Endothelial cell of umbilical vein (primary cell): ENCODE measurements at regions of chr17 and their contacts with region 1.

Region 1: GRCh38 chr17:8409966-8410864 is 12.6 kb upstream of the RNF222 start:
- DNase-seq: peak; percentile 84
- H3K4me3 ChIP-seq: no peak overlapping the region
- H3K27ac ChIP-seq: no peak overlapping the region
- H3K4me1 ChIP-seq: no peaks in the 10 kb centered on the region
- H3K27me3 ChIP-seq: peaks cover 4 to 9% of the 10 kb centered on the region in 2 experiments
- CTCF ChIP-seq: peak; percentile 81 to 86
- POLR2A ChIP-seq: no peak

Region 2: DNA sequence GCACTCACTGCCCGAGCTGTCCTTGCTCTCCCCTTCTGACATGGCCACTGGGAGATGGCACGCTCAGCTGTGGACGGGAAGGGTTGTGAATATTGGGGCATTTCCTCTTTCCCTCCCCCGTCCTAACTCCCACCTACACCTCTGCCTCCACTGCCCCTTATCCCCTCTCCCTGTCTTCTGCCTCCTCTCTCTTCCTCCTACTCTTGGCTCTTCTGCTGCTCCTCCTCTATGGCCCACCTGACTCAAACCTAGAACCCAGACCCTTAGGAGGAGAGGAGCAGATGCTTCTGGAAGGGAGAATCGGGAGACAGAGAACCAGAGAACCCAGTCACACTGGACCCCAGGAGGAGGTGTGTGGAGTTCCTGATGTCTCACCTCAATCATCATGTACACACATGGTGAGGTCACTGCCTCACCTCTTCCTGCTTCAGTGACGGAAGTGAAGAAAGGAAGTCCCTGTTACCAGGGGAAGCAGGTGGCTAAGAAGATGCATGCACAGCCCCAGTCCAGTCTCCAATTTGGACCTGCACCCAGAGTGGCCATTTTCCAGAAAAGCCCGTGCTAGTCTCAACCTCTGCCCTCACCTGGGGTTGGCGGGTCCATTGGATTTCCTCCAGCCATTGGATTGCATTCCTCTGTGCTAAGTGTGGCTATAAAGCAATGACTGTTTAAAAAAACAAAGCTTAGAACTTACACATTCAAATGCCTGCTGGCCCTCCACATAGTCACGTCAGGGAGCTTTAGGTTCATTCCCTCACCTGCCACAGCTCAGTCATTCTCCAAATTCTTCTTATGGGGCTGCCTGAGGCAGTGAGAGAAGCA is 16.6 kb before region 1 on chr17:
- CTCF ChIA-PET with region 1: interaction called, 10 read pairs
- POLR2A ChIA-PET with region 1: no interaction called
- dilution Hi-C with region 1: no loop called
- intact Hi-C with region 1: no loop called
- DNase-seq: no peak
- H3K4me3 ChIP-seq: no peak overlapping the region
- H3K27ac ChIP-seq: no peak overlapping the region
- H3K4me1 ChIP-seq: peaks cover 4% of the 10 kb centered on the region
- H3K27me3 ChIP-seq: peaks cover 13 to 18% of the 10 kb centered on the region in 2 experiments
- CTCF ChIP-seq: no peak
- POLR2A ChIP-seq: no peak

Region 3: DNA sequence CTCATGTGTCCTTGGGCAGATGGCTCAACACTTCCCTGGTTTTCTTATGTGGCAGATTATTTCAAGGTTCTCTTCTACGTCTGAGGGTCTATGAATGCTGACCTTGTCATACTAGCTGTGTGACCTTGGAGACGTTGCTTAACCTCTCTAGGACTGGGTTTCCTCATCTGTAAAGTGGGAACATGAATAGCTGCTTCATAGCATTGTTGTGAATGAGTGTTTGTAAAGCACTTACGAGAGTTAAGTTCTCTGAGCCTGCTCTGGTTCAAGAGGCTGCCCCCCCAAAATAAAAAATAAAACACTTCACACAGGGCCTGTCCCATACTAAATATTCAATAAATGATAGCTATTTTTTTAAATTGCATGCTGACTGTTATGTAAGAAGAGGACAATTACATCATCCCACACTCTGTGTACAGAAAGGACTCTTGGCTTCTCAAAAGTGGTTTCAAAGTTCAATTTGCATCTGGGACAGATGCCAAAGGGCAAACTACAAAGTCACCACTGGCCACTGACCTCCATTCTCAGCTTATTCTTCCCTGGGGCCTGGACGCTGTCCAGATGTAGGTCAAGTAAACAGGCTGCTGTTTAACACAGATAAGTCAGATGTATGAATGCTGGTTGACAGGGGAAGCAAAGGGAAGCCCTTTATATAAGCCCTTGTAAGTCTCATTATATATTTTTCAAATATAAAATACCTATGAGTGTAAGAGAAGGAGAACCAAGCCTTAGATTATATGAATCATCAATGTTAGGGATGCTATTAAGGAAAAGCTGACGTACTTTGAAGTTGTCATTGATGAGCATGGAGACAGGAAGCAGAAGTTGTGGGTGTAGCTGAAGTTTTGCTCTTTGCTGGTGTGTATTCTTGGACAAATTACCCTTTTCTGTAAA is 10.1 kb after region 1 on chr17:
- CTCF ChIA-PET with region 1: interaction called, 29 read pairs
- POLR2A ChIA-PET with region 1: no interaction called
- dilution Hi-C with region 1: no loop called
- intact Hi-C with region 1: no loop called
- DNase-seq: peak; percentile 98
- H3K4me3 ChIP-seq: no peak overlapping the region
- H3K27ac ChIP-seq: no peak overlapping the region
- H3K4me1 ChIP-seq: peaks cover 12% of the 10 kb centered on the region
- H3K27me3 ChIP-seq: peaks cover 2 to 6% of the 10 kb centered on the region in 2 experiments
- CTCF ChIP-seq: no peak
- POLR2A ChIP-seq: peak; percentile 55

Region 4: DNA sequence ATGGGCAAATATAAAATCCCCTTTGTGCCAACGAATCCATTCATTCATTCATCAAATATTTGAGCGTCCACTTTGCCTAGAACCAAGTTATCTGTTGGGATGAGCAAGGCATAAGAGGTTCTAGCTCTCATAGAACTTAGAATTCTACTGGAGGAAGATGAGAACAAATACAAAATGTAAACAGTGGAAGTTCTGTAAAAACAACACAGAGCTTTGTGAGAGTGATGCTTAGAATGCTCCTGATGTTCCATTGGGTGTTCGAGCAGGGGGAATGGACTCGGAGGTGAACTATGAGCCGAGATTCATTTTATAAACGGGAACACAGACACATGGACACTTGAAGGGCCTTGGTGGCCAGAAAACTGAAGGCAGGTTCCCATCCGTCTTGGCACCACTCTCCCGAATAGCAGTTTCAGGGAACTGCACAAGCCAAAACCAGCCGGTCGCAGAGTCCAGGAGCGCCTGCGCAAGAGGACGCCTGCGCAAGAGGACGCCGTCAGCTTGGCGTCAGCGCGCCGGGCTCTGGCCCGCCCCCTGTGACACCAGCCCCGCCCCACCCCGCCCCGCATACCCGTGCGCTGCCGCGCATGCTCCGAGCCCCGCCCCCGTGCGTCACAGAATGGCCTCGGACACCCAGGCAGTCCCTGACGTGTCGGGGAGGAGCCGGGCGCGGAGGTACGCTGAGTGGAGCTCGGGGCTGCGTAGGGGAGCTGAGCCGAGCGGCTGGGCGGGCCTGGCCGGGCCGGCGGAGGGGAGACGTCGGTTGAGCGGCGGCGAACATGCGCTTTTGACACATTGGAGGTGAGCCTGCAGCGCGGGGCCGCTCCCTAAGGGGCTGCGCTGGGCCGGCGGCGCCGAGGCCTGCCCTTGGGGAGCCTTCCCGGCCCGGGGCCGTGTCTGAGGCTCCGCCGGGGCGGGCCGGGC is 25.3 kb after region 1 on chr17 and contains the start of gene NDEL1:
- CTCF ChIA-PET with region 1: interaction called, 15 read pairs
- POLR2A ChIA-PET with region 1: interaction called, 3 read pairs
- dilution Hi-C with region 1: no loop called
- intact Hi-C with region 1: loop called (anchors 1 kb)
- DNase-seq: peak; percentile 98
- H3K4me3 ChIP-seq: peak within 1 kb of the TSS; percentile 77 to 97 (median 93)
- H3K27ac ChIP-seq: peak within 1 kb of the TSS; percentile 86
- H3K4me1 ChIP-seq: peaks cover 12% of the 10 kb centered on the region
- H3K27me3 ChIP-seq: no peaks in the 10 kb centered on the region
- CTCF ChIP-seq: no peak
- POLR2A ChIP-seq: peak; percentile 95
- total RNA-seq, gene NDEL1: 60.0 and 65.7 TPM in 2 replicates

Region 5: DNA sequence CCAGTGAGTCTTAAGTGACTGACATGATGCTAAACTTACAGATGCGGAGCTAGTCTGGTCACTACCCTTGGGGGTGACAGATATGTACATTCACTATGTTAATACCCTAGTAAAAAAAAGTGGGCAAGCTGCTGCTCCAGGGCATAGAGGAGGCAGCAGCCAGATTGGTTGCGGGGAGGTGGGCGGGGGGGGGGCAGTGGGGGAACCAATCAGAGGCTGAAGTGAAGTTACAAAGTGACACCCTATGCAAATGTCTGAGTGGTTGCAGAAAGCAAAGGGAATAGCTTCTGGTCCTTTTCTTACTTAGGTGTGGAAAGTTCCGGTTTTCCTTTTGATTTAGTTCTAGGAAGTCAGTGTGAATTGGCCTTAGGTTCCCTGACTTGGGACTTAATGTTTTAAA is 37.6 kb after region 1 on chr17:
- CTCF ChIA-PET with region 1: interaction called, 23 read pairs
- POLR2A ChIA-PET with region 1: no interaction called
- dilution Hi-C with region 1: no loop called
- intact Hi-C with region 1: no loop called
- DNase-seq: no peak
- H3K4me3 ChIP-seq: no peak overlapping the region
- H3K27ac ChIP-seq: no peak overlapping the region
- H3K4me1 ChIP-seq: peaks cover 37% of the 10 kb centered on the region
- H3K27me3 ChIP-seq: no peaks in the 10 kb centered on the region
- CTCF ChIP-seq: no peak
- POLR2A ChIP-seq: no peak

Region 6: DNA sequence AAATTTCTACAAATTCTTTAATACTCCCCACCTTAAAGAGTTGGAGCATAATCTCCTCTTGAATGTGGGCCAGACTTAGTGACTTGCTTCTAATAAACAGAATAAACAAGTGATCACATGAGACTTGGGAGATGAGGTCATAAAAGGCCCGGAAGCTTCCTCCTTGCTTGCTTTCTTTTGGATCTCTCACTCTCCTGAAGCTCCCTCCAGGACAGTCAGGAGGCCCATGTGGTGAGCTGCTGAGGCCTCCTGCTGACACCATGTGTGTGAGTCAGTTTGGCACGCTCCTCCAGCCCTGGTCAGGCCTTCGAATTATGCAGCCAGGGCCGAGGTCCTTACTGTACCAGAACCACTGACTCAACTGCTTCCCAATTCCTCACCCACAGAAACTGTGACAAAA is 78.7 kb after region 1 on chr17:
- CTCF ChIA-PET with region 1: interaction called, 4 read pairs
- POLR2A ChIA-PET with region 1: no interaction called
- dilution Hi-C with region 1: no loop called
- intact Hi-C with region 1: loop called (anchors 1 kb)
- DNase-seq: peak; percentile 38
- H3K4me3 ChIP-seq: no peak overlapping the region
- H3K27ac ChIP-seq: no peak overlapping the region
- H3K4me1 ChIP-seq: no peaks in the 10 kb centered on the region
- H3K27me3 ChIP-seq: no peaks in the 10 kb centered on the region
- CTCF ChIP-seq: no peak
- POLR2A ChIP-seq: no peak

Region 7: GRCh38 chr17:8785547-8786413 is 375.6 kb after region 1 on chr17:
- CTCF ChIA-PET with region 1: interaction called, 51 read pairs
- POLR2A ChIA-PET with region 1: no interaction called
- dilution Hi-C with region 1: no loop called
- intact Hi-C with region 1: loop called (anchors 1 kb)
- DNase-seq: peak; percentile 70
- H3K4me3 ChIP-seq: no peak overlapping the region
- H3K27ac ChIP-seq: no peak overlapping the region
- H3K4me1 ChIP-seq: no peaks in the 10 kb centered on the region
- H3K27me3 ChIP-seq: no peaks in the 10 kb centered on the region
- CTCF ChIP-seq: peak; percentile 81 to 90
- POLR2A ChIP-seq: no peak

Region 8: DNA sequence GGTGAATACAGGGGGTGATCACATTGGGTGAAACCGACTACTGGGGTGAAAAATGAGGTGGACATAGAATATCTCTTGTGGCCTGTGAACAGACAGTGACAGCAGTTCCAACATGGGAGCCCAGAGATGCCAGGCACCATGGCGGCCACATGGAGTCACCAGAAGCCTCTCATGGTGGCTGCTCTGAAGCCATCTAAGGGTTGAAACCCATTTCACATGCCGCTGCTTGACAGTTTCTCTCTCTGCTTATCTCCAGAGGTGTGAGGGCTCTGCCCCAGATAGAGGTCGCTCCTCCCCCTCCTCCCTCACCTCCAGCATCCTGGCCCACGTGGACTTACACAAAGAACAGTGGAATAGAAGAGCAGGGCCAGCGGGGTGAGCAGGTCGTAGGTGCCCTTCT is 495.1 kb after region 1 on chr17:
- CTCF ChIA-PET with region 1: no interaction called
- POLR2A ChIA-PET with region 1: no interaction called
- dilution Hi-C with region 1: no loop called
- intact Hi-C with region 1: no loop called
- DNase-seq: no peak
- H3K4me3 ChIP-seq: no peak overlapping the region
- H3K27ac ChIP-seq: no peak overlapping the region
- H3K4me1 ChIP-seq: no peaks in the 10 kb centered on the region
- H3K27me3 ChIP-seq: no peaks in the 10 kb centered on the region
- CTCF ChIP-seq: no peak
- POLR2A ChIP-seq: no peak